GM12878 (cell line): ENCODE measurements at regions of chr7 and their contacts with region 1.

Region 1: DNA sequence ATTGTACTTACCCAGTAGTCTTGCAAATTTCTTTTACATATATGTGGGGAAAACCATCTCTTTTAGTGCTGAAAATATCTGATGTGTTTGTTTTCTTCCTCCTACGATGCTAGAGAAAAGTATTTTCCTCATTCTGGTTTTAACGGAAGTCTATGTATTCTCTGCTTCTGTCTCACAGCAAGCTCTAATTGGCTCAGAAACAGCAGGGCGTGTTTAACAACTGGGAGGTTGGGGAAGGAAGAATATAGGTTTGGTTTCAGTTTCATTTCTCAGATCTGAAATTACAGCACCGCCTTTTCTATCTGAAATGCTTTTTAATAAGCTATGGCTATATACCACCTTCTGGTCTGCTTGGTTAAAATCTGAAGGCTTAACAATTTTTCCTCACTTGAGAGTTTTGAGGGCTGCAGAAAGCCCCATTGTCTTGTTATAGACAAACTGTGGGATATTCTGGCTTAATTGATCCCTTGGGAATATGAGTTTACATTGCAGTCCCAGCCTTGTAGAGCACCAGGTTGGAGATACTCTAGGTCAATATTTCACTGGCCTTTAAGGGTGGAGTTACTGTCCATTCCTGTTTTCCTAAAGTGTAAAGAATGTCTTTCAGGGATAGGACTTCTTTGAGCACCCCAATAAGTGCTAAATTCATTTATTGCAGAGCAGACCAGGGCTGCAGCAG is at the start of gene SAMD9:
- DNase-seq: peak; percentile 77
- ATAC-seq: peak; percentile 97
- H3K4me3 ChIP-seq: peak within 1 kb of the TSS; percentile 73
- H3K27ac ChIP-seq: peak within 1 kb of the TSS; percentile 91
- H3K4me1 ChIP-seq: peaks cover 4% of the 10 kb centered on the region
- H3K27me3 ChIP-seq: no peaks in the 10 kb centered on the region
- CTCF ChIP-seq: no peak
- EP300 ChIP-seq: no peak; a peak in 1 of 4 replicates
- POLR2A ChIP-seq: no peak
- RAD21 ChIP-seq: no peak
- polyA plus RNA-seq, gene SAMD9: 6.4 to 8.3 TPM

Region 2: DNA sequence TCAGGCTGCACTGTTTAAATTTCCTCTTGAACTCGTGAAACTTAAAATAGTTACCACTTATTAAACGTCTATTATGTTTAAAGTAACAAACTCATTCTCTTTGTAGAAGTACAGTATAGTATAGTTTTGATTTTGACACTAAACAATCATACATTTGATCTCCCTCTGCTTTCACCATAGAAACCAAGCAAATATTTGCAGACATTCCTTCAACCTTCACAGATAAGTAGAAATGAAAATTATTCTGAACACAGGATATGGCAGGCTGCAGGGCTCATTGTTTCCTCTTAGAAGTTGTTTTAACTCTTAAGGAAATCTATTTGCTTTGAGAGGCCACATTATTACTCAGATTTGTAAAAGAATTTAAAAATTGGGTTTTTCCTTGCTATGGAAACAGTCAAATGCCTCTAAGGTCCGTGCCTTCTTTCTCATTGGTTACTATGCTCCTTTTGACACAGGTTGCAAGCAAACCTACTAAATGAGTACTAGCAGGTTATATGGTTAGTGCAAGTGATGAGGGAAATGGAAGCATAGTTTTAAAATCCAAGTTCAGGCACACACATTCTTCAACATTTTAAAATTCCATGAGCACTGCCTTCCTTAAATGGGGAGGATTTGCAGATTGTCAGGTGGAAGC is 435.0 kb before region 1 on chr7:
- CTCF ChIA-PET with region 1: no interaction called
- POLR2A ChIA-PET with region 1: no interaction called
- RAD21 ChIA-PET with region 1: no interaction called
- SMC1A ChIA-PET with region 1: no interaction called
- in situ Hi-C with region 1: no loop called
- intact Hi-C with region 1: no loop called
- DNase-seq: no peak
- ATAC-seq: no peak
- H3K4me3 ChIP-seq: no peak overlapping the region
- H3K27ac ChIP-seq: no peak overlapping the region
- H3K4me1 ChIP-seq: no peaks in the 10 kb centered on the region
- H3K27me3 ChIP-seq: no peaks in the 10 kb centered on the region
- CTCF ChIP-seq: no peak
- EP300 ChIP-seq: no peak
- POLR2A ChIP-seq: no peak
- RAD21 ChIP-seq: no peak

Region 3: GRCh38 chr7:93138576-93138975 is 20.6 kb after region 1 on chr7:
- CTCF ChIA-PET with region 1: interaction called, 4 read pairs
- POLR2A ChIA-PET with region 1: interaction called, 4 read pairs
- RAD21 ChIA-PET with region 1: interaction called, 35 read pairs
- SMC1A ChIA-PET with region 1: interaction called, 58 read pairs
- in situ Hi-C with region 1: no loop called
- intact Hi-C with region 1: no loop called
- DNase-seq: no peak
- ATAC-seq: no peak
- H3K4me3 ChIP-seq: no peak overlapping the region
- H3K27ac ChIP-seq: no peak overlapping the region
- H3K4me1 ChIP-seq: no peaks in the 10 kb centered on the region
- H3K27me3 ChIP-seq: no peaks in the 10 kb centered on the region
- CTCF ChIP-seq: no peak
- EP300 ChIP-seq: no peak
- POLR2A ChIP-seq: no peak
- RAD21 ChIP-seq: no peak

Region 4: GRCh38 chr7:93147363-93147762 is 29.4 kb after region 1 on chr7:
- CTCF ChIA-PET with region 1: interaction called, 19 read pairs
- POLR2A ChIA-PET with region 1: interaction called, 33 read pairs
- RAD21 ChIA-PET with region 1: interaction called, 35 read pairs
- SMC1A ChIA-PET with region 1: interaction called, 58 read pairs
- in situ Hi-C with region 1: no loop called
- intact Hi-C with region 1: loop called (anchors 2 kb)
- DNase-seq: peak; percentile 51
- ATAC-seq: peak; percentile 90
- H3K4me3 ChIP-seq: peak overlapping the region; percentile 91
- H3K27ac ChIP-seq: peak overlapping the region; percentile 84
- H3K4me1 ChIP-seq: peaks cover 10% of the 10 kb centered on the region; the same call in 1 of the 2 replicates
- H3K27me3 ChIP-seq: no peaks in the 10 kb centered on the region
- CTCF ChIP-seq: no peak
- EP300 ChIP-seq: no peak
- POLR2A ChIP-seq: no peak
- RAD21 ChIP-seq: no peak

Region 5: DNA sequence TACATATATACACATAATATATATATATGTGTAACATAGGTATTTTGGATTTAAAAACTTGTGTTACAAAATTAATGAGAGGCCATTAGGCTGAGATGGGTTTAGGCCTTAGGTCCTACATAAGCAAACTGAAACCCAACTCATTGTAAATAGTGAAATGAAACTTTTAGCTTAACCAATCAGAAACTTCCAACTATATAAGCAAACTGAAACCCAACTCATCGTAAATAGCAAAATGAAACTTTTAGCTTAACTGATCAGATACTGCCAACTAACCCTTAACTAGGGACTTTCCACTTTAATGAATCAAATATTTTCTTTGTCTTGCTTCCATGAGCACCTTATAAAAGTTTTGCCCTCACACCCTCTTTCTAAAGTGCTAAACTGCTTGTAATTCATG is 47.5 kb after region 1 on chr7:
- CTCF ChIA-PET with region 1: no interaction called
- POLR2A ChIA-PET with region 1: interaction called, 5 read pairs
- RAD21 ChIA-PET with region 1: interaction called, 4 read pairs
- SMC1A ChIA-PET with region 1: interaction called, 10 read pairs
- in situ Hi-C with region 1: no loop called
- intact Hi-C with region 1: no loop called
- DNase-seq: peak; percentile 77
- ATAC-seq: peak; percentile 99
- H3K4me3 ChIP-seq: 0 out of 2 replicates have a peak overlapping the region, but pooled peaks have one; percentile 33
- H3K27ac ChIP-seq: peak overlapping the region; percentile 80; the same call in 1 of the 2 replicates
- H3K4me1 ChIP-seq: peaks cover 2% of the 10 kb centered on the region; the same call in 1 of the 2 replicates
- H3K27me3 ChIP-seq: no peaks in the 10 kb centered on the region
- CTCF ChIP-seq: no peak
- EP300 ChIP-seq: peak in 1 of 2 experiments; percentile 17; a peak in 2 of 4 replicates
- POLR2A ChIP-seq: no peak
- RAD21 ChIP-seq: no peak